ENCODE measurements at regions of chr3 and their contacts with region 1.

Region 1: GRCh38 chr3:129160891-129161859 is at the start of gene ISY1:
- DNase-seq: peak; percentile 91
- H3K4me3 Mint-ChIP-seq: peak within 1 kb of the TSS; percentile 87
- H3K27ac Mint-ChIP-seq: peak within 1 kb of the TSS; percentile 99
- H3K4me1 Mint-ChIP-seq: peaks cover 31% of the 10 kb centered on the region
- H3K27me3 Mint-ChIP-seq: no peaks in the 10 kb centered on the region
- total RNA-seq, gene ISY1: 56.8 to 65.4 TPM

Region 2: GRCh38 chr3:127351321-127351720 is 1809.9 kb before region 1 on chr3:
- CTCF ChIA-PET with region 1: no interaction called
- intact Hi-C with region 1: no loop called
- DNase-seq: no peak
- H3K4me3 Mint-ChIP-seq: no peak overlapping the region
- H3K27ac Mint-ChIP-seq: no peak overlapping the region
- H3K4me1 Mint-ChIP-seq: no peaks in the 10 kb centered on the region
- H3K27me3 Mint-ChIP-seq: peaks cover 15% of the 10 kb centered on the region

Region 3: DNA sequence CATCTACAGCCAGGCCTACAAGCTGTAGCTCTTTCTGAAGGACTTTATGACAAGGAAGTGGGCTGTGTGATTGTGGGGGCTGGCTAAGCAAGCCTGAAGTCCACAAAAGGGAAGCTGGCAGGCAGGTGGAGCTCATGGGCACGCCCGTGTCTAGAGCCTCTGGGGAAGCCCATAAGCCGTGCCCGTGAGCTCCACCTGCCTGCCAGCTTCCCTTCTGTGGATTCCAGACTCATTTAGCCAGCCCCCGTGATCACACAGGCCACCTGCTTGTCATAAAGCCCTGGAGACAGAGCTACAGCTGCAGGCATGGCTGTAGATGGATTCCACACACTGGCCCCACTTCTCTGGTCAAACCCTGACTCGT is 144.8 kb before region 1 on chr3:
- CTCF ChIA-PET with region 1: interaction called, 15 read pairs
- intact Hi-C with region 1: no loop called
- DNase-seq: peak; percentile 88
- H3K4me3 Mint-ChIP-seq: peak overlapping the region; percentile 73
- H3K27ac Mint-ChIP-seq: peak overlapping the region; percentile 95
- H3K4me1 Mint-ChIP-seq: peaks cover 38% of the 10 kb centered on the region
- H3K27me3 Mint-ChIP-seq: no peaks in the 10 kb centered on the region

Region 4: GRCh38 chr3:129112308-129113052 is 48.7 kb before region 1 on chr3:
- CTCF ChIA-PET with region 1: interaction called, 5 read pairs
- intact Hi-C with region 1: loop called (anchors 1 kb)
- DNase-seq: peak; percentile 93
- H3K4me3 Mint-ChIP-seq: peak overlapping the region; percentile 68
- H3K27ac Mint-ChIP-seq: peak overlapping the region; percentile 96
- H3K4me1 Mint-ChIP-seq: peaks cover 84% of the 10 kb centered on the region
- H3K27me3 Mint-ChIP-seq: no peaks in the 10 kb centered on the region

Region 5: DNA sequence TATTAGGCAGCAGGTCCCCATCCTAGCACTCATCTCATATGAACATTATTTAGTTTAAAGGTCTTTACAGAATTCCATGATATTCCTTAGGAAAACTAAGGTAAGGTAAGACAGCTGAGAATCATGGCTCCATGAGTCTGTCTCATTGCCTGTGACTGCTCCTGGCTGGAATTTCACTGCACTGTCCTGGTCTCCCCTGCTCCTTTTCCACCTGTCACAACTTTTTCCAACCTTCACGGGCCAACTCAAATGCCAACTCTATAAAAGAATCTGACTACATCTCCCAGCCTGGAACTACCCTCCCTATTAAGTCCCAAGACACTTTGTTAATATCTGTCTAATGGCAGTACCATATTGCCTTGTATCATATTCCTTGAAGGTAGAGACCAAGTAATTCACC is 14.9 kb after region 1 on chr3:
- CTCF ChIA-PET with region 1: interaction called, 11 read pairs
- intact Hi-C with region 1: no loop called
- DNase-seq: no peak
- H3K4me3 Mint-ChIP-seq: peak overlapping the region; percentile 1
- H3K27ac Mint-ChIP-seq: peak overlapping the region; percentile 60
- H3K4me1 Mint-ChIP-seq: peaks cover 78% of the 10 kb centered on the region
- H3K27me3 Mint-ChIP-seq: no peaks in the 10 kb centered on the region

Region 6: GRCh38 chr3:129984125-129984524 is 823.0 kb after region 1 on chr3:
- CTCF ChIA-PET with region 1: no interaction called
- intact Hi-C with region 1: no loop called
- DNase-seq: no peak
- H3K4me3 Mint-ChIP-seq: no peak overlapping the region
- H3K27ac Mint-ChIP-seq: no peak overlapping the region
- H3K4me1 Mint-ChIP-seq: no peaks in the 10 kb centered on the region
- H3K27me3 Mint-ChIP-seq: no peaks in the 10 kb centered on the region

Measured in activated naive CD4-positive, alpha-beta T cell treated with anti-CD3 and anti-CD28 coated beads for 36 hours (primary cell).